PC-9 (cell line): ENCODE measurements at regions of chr15 and their contacts with region 1.

Region 1: DNA sequence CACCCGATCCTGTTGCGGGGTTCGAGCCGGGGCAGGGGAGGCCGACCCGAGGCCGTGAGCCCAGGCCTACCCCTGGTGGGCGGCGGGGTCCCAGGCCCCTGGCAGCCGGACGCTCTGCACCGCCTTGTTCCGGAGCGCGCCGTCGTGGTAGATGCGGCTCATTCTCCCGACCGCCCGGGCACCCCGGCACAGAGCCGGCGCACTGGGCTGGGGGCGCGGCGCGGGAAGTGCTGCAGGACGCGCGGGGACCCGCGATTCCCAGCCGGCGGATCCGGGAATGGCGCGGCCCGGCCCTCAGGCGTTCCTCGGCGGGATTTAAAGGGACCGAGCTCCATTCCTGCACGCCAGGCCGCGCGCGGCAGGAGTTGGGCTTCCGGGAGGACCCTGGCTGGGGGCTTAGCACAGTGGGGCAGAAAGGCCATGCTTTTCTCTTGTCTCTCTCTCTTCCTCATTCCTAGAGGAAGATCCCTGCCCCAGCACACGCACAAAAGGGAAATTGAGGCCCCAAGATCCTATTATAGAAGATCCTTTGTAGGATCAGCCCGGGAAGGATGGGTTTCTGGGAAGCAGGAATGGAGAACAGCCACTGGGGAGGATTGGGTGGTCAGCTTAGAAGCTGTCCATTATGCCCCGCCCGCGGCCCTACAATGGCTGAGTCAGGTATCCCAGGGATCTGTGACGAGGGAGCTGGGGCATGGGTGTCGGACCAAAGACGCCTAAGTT is at the start of gene ARPIN:
- DNase-seq: peak in 1 of 2 experiments; percentile 49
- H3K4me3 ChIP-seq: peak within 1 kb of the TSS; percentile 96
- H3K27ac ChIP-seq: peak within 1 kb of the TSS; percentile 59
- H3K4me1 ChIP-seq: peaks cover 60% of the 10 kb centered on the region
- H3K27me3 ChIP-seq: no peaks in the 10 kb centered on the region
- CTCF ChIP-seq: no peak
- total RNA-seq, gene ARPIN: 28.6 and 30.4 TPM in 2 replicates

Region 2: GRCh38 chr15:90001683-90002427 is 89.0 kb after region 1 on chr15:
- CTCF ChIA-PET with region 1: no interaction called
- POLR2A ChIA-PET with region 1: interaction called, 6 read pairs
- intact Hi-C with region 1: loop called (anchors 5 kb)
- DNase-seq: peak in 1 of 2 experiments; percentile 42
- H3K4me3 ChIP-seq: peak overlapping the region; percentile 65; the same call in 1 of the 2 replicates
- H3K27ac ChIP-seq: peak overlapping the region; percentile 49
- H3K4me1 ChIP-seq: peaks cover 79% of the 10 kb centered on the region
- H3K27me3 ChIP-seq: no peaks in the 10 kb centered on the region
- CTCF ChIP-seq: no peak

Region 3: DNA sequence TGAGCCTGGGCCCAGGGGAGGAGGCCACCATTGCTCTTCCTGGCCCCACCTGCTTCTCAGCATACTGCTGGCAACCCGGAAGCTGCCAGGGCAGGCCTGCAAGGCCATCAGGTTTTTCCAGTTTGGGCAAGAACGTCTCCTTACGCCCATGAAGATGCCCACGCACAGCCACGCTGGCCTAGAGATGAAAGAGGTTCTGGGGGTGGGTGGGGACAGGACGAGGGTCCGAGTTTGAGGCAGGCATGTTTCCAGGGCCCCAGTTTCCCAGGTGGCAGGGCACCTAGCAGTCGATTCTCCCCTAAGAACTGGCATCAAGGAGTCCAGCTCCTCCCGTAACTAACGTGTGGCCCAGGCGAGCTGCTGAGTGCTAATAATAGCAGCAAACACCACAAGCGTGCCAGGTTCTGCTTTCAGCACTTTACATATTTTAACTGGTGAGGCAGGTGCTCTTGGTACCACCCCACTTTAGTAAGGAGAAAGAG is 134.1 kb after region 1 on chr15:
- CTCF ChIA-PET with region 1: no interaction called
- POLR2A ChIA-PET with region 1: interaction called, 10 read pairs
- intact Hi-C with region 1: no loop called
- DNase-seq: peak; percentile 73 to 90
- H3K4me3 ChIP-seq: no peak overlapping the region
- H3K27ac ChIP-seq: peak overlapping the region; percentile 51
- H3K4me1 ChIP-seq: peaks cover 22% of the 10 kb centered on the region
- H3K27me3 ChIP-seq: no peaks in the 10 kb centered on the region
- CTCF ChIP-seq: no peak